CD8-positive, alpha-beta T cell (primary cell): ENCODE measurements at regions of chr9 and their contacts with region 1.

Region 1: DNA sequence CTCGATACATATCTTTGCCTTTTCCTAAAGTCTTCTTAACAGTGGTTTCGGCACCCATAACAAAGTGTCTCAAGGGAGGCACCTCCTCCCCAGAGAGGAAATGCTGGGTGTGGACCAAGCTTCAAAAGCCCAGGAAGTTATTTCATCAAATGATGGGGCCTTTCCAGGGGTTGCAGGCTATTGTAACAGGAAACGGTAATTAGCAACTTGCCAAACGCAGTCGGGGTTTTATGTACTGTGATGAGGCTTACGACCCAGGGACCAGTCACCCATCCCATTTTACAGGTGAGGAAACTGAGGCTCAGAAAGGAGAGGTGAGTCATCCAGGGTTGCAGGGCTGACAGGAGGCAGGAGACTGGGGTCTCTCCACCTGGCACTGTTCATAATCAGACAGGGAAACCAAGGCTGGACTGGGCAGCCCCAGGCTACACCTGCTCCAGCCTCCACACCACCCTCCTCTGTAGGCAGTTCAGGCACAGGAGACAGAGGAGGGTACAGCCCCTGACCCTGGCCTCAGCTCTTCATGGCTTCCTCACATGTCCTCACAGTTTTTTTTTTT is 30.0 kb upstream of the SUSD3 start:
- DNase-seq: peak; percentile 44 to 94 (median 74)
- ATAC-seq: peak; percentile 83
- H3K4me3 ChIP-seq: peak overlapping the region; percentile 21 to 35
- H3K4me3 Mint-ChIP-seq: peak overlapping the region; percentile 72
- H3K27ac ChIP-seq: peak overlapping the region; percentile 78 to 86
- H3K27ac Mint-ChIP-seq: peak overlapping the region; percentile 97
- H3K4me1 ChIP-seq: peaks cover 91% of the 10 kb centered on the region
- H3K4me1 Mint-ChIP-seq: peaks cover 86% of the 10 kb centered on the region
- H3K27me3 ChIP-seq: no peaks in the 10 kb centered on the region
- H3K27me3 Mint-ChIP-seq: no peaks in the 10 kb centered on the region
- CTCF ChIP-seq: no peak

Region 2: GRCh38 chr9:92986176-92987085 is 42.1 kb before region 1 on chr9:
- CTCF ChIA-PET with region 1: interaction called, 3 read pairs
- POLR2A ChIA-PET with region 1: no interaction called
- intact Hi-C with region 1: loop called in 1 of 2 experiments (anchors 5 kb)
- DNase-seq: peak in 7 of 9 experiments; percentile 22 to 80 (median 67)
- ATAC-seq: peak; percentile 76
- H3K4me3 ChIP-seq: no peak overlapping the region
- H3K4me3 Mint-ChIP-seq: peak overlapping the region; percentile 6
- H3K27ac ChIP-seq: peak overlapping the region; percentile 14 to 59
- H3K27ac Mint-ChIP-seq: peak overlapping the region; percentile 86
- H3K4me1 ChIP-seq: peaks cover 73% of the 10 kb centered on the region
- H3K4me1 Mint-ChIP-seq: peaks cover 83% of the 10 kb centered on the region
- H3K27me3 ChIP-seq: no peaks in the 10 kb centered on the region
- H3K27me3 Mint-ChIP-seq: no peaks in the 10 kb centered on the region
- CTCF ChIP-seq: peak; percentile 73

Region 3: GRCh38 chr9:93013856-93014582 is 14.5 kb before region 1 on chr9:
- CTCF ChIA-PET with region 1: interaction called, 5 read pairs
- POLR2A ChIA-PET with region 1: interaction called, 10 read pairs
- intact Hi-C with region 1: no loop called
- DNase-seq: peak in 1 of 9 experiments; percentile 45
- ATAC-seq: no peak
- H3K4me3 ChIP-seq: no peak overlapping the region
- H3K4me3 Mint-ChIP-seq: no peak overlapping the region
- H3K27ac ChIP-seq: no peak overlapping the region
- H3K27ac Mint-ChIP-seq: peak overlapping the region; percentile 78
- H3K4me1 ChIP-seq: no peaks in the 10 kb centered on the region
- H3K4me1 Mint-ChIP-seq: peaks cover 17% of the 10 kb centered on the region
- H3K27me3 ChIP-seq: no peaks in the 10 kb centered on the region
- H3K27me3 Mint-ChIP-seq: no peaks in the 10 kb centered on the region
- CTCF ChIP-seq: no peak

Region 4: DNA sequence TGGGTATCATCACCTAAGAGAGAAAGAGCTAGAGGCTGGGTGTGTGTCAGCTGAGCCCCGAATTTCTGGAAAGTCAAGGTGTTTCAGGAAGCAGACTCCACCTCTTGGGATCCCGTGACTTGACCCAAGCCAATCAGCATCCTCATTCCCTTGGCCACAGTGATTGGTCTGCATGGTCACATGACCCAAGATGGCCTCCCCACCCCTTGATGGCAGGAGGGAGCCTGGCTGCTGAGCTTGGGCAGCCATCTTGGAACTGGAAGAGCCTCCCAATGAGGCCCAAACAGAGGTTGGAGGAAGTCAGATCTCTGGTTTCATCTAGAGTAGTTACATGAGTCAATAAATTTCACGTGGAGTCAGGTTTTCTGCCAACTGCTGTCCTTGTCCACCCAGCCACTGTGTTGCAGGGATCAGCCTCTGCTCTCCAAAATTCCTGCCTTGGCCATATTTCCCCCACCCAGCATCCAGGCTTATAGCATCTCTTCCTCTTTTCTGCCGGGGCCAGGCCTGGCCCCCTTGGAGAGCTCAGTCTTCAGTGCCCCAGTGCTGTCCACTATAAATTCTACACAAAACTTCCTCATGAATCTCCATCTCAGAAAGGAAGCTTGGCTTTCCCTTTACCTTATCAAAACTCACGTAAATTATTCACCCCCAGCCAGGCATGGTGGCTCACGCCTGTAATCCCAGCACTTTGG is 12.7 kb after region 1 on chr9:
- CTCF ChIA-PET with region 1: interaction called, 11 read pairs
- POLR2A ChIA-PET with region 1: interaction called, 17 read pairs
- intact Hi-C with region 1: loop called in 1 of 2 experiments (anchors 2 kb)
- DNase-seq: peak in 1 of 9 experiments; percentile 50
- ATAC-seq: no peak
- H3K4me3 ChIP-seq: no peak overlapping the region
- H3K4me3 Mint-ChIP-seq: no peak overlapping the region
- H3K27ac ChIP-seq: peak overlapping the region in 1 of 2 experiments; percentile 28
- H3K27ac Mint-ChIP-seq: peak overlapping the region; percentile 79
- H3K4me1 ChIP-seq: peaks cover 53% of the 10 kb centered on the region
- H3K4me1 Mint-ChIP-seq: peaks cover 67% of the 10 kb centered on the region
- H3K27me3 ChIP-seq: no peaks in the 10 kb centered on the region
- H3K27me3 Mint-ChIP-seq: no peaks in the 10 kb centered on the region
- CTCF ChIP-seq: no peak

Region 5: DNA sequence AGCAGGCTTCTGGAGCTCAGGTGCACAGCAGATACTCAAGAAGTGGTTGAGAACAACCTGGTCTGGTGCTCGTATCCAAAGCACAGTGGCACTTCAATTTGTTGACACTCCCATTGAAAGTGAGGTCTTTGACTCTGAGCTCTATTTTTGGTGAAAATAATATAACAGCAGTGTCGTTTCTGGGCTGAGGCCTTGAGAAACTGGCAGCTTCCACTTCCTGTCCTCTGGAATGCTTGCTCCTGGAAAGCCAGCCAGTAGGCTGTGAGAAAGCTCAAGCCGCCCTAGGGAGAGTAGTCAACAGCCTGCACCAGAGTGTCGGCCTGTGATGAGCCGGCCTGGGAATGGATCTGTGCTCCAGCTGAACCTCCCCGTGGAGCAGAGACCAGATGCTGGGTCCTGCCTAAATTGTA is 23.2 kb after region 1 on chr9:
- CTCF ChIA-PET with region 1: interaction called, 5 read pairs
- POLR2A ChIA-PET with region 1: interaction called, 13 read pairs
- intact Hi-C with region 1: no loop called
- DNase-seq: no peak
- ATAC-seq: no peak
- H3K4me3 ChIP-seq: no peak overlapping the region
- H3K4me3 Mint-ChIP-seq: no peak overlapping the region
- H3K27ac ChIP-seq: no peak overlapping the region
- H3K27ac Mint-ChIP-seq: peak overlapping the region; percentile 21
- H3K4me1 ChIP-seq: peaks cover 48% of the 10 kb centered on the region
- H3K4me1 Mint-ChIP-seq: peaks cover 53% of the 10 kb centered on the region
- H3K27me3 ChIP-seq: no peaks in the 10 kb centered on the region
- H3K27me3 Mint-ChIP-seq: no peaks in the 10 kb centered on the region
- CTCF ChIP-seq: no peak

Region 6: DNA sequence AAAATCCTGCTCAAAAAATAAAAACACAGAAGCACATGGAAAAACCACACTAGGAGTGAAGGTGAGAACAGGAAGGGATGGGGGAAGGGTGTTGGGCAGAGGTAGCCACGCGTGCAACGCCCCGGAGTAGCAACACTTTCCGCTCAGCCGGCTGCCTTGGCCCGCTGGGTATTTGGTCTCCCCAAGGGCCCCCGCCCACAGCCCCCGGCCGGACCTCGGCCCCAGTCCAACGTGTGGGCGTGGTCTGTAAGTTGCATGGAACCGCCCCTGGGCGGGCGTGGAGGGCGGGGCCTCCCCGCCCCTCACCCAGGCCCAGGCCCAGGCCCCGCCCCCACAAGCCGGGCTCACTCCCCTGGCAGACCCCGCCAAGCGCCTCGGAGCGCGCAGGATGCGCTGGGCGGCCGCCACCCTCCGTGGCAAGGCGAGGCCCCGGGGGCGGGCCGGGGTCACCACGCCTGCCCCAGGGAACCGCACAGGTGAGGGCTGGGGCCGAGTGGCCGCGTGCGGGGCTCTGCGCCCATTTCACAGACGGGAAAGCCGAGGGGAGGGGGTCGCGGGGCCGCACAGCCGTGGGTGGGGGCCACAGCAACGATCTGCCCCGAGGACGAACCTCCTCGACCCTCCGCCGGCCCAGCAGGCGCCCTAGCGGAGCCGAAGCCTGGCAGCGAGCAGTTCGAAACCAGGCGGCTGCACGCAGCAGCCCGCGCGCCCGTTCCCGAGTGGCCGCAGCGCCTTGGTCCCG is 30.0 kb after region 1 on chr9 and contains the start of gene SUSD3:
- CTCF ChIA-PET with region 1: interaction called, 8 read pairs
- POLR2A ChIA-PET with region 1: interaction called, 29 read pairs
- intact Hi-C with region 1: no loop called
- DNase-seq: peak in 8 of 9 experiments; percentile 52 to 84 (median 69)
- ATAC-seq: peak; percentile 63
- H3K4me3 ChIP-seq: peak within 1 kb of the TSS; percentile 60 to 91
- H3K4me3 Mint-ChIP-seq: peak within 1 kb of the TSS; percentile 91
- H3K27ac ChIP-seq: peak within 1 kb of the TSS; percentile 63 to 83
- H3K27ac Mint-ChIP-seq: peak within 1 kb of the TSS; percentile 100
- H3K4me1 ChIP-seq: peaks cover 81% of the 10 kb centered on the region
- H3K4me1 Mint-ChIP-seq: peaks cover 80% of the 10 kb centered on the region
- H3K27me3 ChIP-seq: no peaks in the 10 kb centered on the region
- H3K27me3 Mint-ChIP-seq: no peaks in the 10 kb centered on the region
- CTCF ChIP-seq: no peak
- total RNA-seq, gene SUSD3: 20.6 to 22.7 TPM

Region 7: DNA sequence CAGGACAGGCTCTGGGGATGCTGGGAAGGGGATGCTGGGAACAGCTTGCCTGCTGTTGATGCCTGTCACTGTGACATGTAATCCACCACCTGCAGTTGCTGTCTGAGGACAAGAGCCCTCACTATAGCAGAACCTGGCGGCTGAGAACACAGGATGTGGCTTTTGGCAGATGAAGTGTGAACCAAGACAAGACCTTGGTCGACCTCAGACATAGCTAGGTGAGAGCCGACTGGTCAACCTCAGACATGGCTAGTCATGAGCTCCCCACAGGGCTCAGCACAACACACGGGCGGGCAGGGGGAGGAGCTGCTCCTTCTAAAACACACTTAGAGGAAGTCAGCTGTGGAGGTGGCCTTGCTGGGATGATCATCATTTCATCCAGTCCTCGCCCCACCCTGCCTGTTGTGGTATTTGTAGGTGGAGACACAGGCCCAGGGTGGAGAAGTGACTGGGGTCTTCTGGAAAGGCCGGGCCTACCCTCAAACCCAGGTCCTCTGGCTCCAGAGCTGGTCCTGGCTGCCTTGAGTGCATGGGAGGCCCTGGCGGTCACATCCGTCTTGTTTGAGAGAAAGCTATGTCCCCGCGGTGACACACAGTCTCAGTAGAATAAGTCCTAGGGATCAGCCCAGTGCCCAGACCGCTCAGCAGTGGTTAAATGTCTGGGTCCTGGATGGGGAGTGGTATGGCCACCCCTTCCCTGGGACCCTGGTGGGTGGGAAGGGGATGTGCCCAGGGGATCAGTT is 36.0 kb after region 1 on chr9:
- CTCF ChIA-PET with region 1: interaction called, 9 read pairs
- POLR2A ChIA-PET with region 1: interaction called, 33 read pairs
- intact Hi-C with region 1: loop called (anchors 1 kb)
- DNase-seq: peak; percentile 78 to 97 (median 89)
- ATAC-seq: peak; percentile 89
- H3K4me3 ChIP-seq: peak overlapping the region; percentile 24 to 91
- H3K4me3 Mint-ChIP-seq: peak overlapping the region; percentile 83
- H3K27ac ChIP-seq: peak overlapping the region; percentile 70 to 83
- H3K27ac Mint-ChIP-seq: peak overlapping the region; percentile 100
- H3K4me1 ChIP-seq: peaks cover 94% of the 10 kb centered on the region
- H3K4me1 Mint-ChIP-seq: peaks cover 88% of the 10 kb centered on the region
- H3K27me3 ChIP-seq: no peaks in the 10 kb centered on the region
- H3K27me3 Mint-ChIP-seq: no peaks in the 10 kb centered on the region
- CTCF ChIP-seq: no peak